Left cardiac atrium (tissue), 4 donors: ENCODE measurements at regions of chr11 and their contacts with region 1.

Region 1: DNA sequence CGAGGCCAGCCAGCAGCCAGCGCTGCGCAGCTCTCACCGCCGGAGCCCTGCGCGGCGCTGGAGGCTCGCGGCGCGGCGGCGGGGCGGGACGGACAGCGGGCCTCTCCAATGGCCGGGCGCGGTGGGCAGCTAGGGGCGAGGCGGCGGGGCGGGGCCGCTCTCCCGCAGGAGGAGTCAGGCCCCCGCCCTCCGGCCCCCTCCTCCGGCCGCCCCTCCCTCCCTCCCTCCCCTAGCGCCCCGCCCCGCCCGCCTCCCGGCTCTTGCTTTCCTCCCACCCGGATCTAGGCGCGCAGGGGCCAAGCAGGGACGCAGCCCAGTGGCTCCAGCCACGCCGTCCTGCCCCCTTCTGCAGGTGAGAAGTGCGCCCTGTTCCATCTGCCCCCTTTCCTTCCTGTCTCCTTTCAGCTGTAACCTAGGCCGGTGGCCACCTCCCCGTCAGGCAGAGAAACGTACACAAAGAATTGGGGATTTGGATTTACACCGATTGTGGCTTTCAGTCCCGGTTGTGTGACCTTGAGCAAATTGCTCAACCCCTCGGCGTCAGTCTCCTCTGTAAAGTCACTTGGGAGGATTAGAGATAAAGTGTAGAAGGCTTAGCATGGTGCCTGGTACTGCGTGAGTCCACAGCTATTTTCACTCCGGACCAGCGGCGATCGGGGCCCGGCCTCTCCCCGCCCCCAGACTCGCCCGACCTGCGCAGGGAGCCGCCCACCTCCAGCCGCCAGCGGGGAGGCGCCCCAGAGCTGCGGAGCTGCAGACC is at the start of gene FZD4:
- DNase-seq: peak; percentile 93
- ATAC-seq: peak; percentile 93 to 96
- total RNA-seq, gene FZD4: 45.5 to 54.2 TPM

Region 2: DNA sequence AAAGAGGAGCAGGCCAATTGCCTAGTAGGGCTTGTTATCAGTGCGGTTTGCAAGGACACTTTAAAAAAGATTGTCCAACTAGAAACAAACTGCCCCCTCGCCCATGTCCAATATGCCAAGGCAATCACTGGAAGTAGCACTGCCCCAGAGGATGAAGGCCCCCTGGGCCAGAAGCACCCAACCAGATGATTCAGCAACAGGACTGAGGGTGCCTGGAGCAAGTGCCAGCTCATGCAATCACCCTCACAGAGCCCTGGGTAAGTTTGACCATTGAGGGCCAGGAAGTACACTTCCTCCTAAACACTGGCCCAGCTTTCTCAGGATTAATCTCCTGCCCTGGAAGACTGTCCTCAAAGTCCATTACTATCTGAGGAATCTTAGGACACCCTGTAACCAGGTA is 106.7 kb before region 1 on chr11:
- intact Hi-C with region 1: no loop called
- DNase-seq: no peak
- ATAC-seq: no peak

Region 3: DNA sequence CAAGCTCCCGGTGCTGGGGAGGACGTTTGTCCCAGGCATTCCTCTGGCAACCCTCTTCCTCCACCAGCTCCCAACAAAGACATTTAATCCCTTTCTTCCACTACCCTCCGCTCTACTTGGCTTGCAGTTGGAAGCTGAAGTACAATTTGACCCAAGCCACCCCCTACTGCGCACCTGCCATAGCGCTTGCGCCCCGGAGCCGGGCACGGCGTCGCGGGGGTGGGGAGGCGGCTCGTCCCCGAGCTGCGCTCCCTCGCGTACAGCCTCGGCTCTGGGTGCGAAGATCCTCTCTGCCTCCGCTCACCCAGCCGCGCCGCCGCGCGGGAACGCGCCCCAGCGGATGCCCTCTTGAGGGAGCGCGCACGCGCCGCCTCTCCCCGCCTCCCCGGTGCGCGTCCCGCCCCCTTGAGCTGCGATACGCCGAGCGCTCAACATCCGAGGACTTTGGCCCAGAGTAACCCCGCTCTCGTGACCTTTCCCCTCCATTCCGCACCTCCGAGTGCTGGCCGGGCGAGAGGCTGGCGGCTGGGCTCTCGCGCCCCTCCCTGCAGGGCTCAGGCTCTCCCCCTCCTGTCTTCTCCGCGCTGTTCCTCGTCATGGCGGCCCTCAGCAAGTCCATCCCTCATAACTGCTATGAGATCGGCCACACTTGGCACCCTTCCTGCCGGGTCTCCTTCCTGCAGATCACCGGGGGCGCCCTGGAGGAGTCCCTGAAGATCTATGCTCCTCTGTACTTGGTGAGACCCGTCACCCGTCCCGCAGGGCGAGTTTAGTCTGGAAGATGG is 82.1 kb after region 1 on chr11 and contains the start of gene TMEM135:
- intact Hi-C with region 1: loop called in 1 of 2 experiments (anchors 5 kb)
- DNase-seq: peak; percentile 95
- ATAC-seq: peak; percentile 98 to 99
- total RNA-seq, gene TMEM135: 23.1 to 30.8 TPM

Region 4: DNA sequence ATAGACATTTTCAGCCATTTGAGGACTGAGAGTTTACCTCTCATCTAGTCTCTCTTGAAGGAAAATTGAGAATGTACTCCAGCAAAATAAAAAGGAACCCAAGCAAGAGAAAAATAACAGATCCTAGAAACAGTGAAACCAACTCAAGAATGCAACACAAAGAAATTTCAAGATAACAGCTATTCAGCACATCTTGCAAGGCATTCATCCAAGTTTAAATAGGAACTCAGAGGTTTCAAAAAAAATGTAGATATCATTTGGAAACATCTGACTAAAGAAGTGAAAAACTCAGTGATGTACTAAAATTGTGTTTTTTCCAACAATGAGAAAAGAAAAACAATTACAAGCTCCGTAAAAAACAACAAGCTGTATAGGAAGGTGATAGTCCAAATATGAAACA is 158.6 kb after region 1 on chr11:
- intact Hi-C with region 1: loop called in 1 of 2 experiments (anchors 10 kb)
- DNase-seq: no peak
- ATAC-seq: no peak